HepG2 (cell line): ENCODE measurements at regions of chr2 and their contacts with region 1.

Region 1: GRCh38 chr2:1591978-1592907 is 152.1 kb downstream of the PXDN start:
- DNase-seq: no peak
- ATAC-seq: peak; percentile 67
- H3K4me3 ChIP-seq: no peak overlapping the region
- H3K27ac ChIP-seq: no peak overlapping the region
- H3K4me1 ChIP-seq: no peaks in the 10 kb centered on the region
- H3K27me3 ChIP-seq: peaks cover 10 to 49% of the 10 kb centered on the region in 2 experiments; a peak in 4 of 5 replicates
- CTCF ChIP-seq: peak; percentile 57
- EP300 ChIP-seq: no peak
- POLR2A ChIP-seq: no peak
- RAD21 ChIP-seq: peak; percentile 42; the same call in 1 of the 2 replicates

Region 2: GRCh38 chr2:1769703-1770422 is 177.6 kb after region 1 on chr2:
- CTCF ChIA-PET with region 1: interaction called, 4 read pairs
- POLR2A ChIA-PET with region 1: no interaction called
- in situ Hi-C with region 1: loop called (anchors 5 kb)
- intact Hi-C with region 1: no loop called
- DNase-seq: peak; percentile 65
- ATAC-seq: peak; percentile 95
- H3K4me3 ChIP-seq: no peak overlapping the region
- H3K27ac ChIP-seq: no peak overlapping the region
- H3K4me1 ChIP-seq: no peaks in the 10 kb centered on the region
- H3K27me3 ChIP-seq: peaks cover 3 to 24% of the 10 kb centered on the region in 2 experiments; a peak in 3 of 5 replicates
- CTCF ChIP-seq: peak; percentile 85
- EP300 ChIP-seq: no peak
- POLR2A ChIP-seq: no peak
- RAD21 ChIP-seq: peak; percentile 25; the same call in 1 of the 2 replicates

Region 3: GRCh38 chr2:1817256-1818051 is 225.2 kb after region 1 on chr2:
- CTCF ChIA-PET with region 1: no interaction called
- POLR2A ChIA-PET with region 1: no interaction called
- in situ Hi-C with region 1: no loop called
- intact Hi-C with region 1: loop called (anchors 2 kb)
- DNase-seq: peak; percentile 7
- ATAC-seq: peak; percentile 96
- H3K4me3 ChIP-seq: no peak overlapping the region
- H3K27ac ChIP-seq: no peak overlapping the region
- H3K4me1 ChIP-seq: no peaks in the 10 kb centered on the region
- H3K27me3 ChIP-seq: peaks cover 4 to 48% of the 10 kb centered on the region in 2 experiments; a peak in 4 of 5 replicates
- CTCF ChIP-seq: peak; percentile 92
- EP300 ChIP-seq: no peak
- POLR2A ChIP-seq: no peak
- RAD21 ChIP-seq: peak; percentile 33; the same call in 1 of the 2 replicates

Region 4: DNA sequence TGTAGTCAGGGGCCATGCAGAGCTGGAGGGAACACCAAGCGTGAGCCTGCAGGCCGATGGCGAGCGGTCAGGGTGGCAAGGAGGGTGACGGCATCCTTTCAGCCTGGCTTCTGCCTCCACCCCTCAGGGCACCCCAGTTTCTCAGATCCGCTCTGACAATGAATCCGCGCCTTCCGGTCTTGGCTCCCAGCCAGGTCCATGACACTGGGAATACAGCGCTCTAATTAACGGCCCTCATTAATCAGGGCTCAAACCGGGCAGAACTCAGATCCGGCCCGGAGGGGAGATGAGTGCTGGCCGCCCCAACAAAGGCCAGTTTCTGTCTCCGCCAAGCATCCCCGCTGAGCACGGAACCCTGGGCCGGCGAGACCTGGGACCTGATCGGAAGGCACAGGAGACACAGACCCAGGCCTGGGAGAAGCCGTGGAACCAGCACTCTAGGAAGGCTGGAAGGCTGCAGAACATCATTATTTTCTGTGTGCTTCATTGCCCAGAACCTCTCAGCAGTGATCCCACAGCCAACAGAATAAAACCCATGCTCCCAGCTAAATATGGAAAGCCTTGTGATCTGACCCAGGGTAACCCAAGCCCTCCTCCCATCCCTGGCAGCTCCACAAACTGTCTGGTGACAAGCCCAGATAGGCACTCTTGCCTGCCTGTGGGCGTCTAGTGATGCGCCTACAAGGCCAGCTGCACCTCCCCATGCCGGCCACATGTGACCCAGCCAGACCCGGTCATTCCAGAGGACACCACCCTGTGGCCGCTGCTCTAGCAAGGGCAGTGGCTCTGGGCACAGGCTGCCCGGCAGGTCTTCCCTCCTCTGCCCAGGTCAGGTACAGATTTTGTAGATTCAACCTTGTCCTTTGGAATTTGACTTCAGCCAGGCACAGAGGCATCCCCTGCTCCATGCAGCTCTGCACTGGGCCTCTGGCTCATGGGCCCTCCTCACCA is 1177.5 kb after region 1 on chr2:
- CTCF ChIA-PET with region 1: no interaction called
- POLR2A ChIA-PET with region 1: no interaction called
- in situ Hi-C with region 1: no loop called
- intact Hi-C with region 1: loop called (anchors 5 kb)
- DNase-seq: no peak
- ATAC-seq: peak; percentile 86
- H3K4me3 ChIP-seq: no peak overlapping the region
- H3K27ac ChIP-seq: no peak overlapping the region
- H3K4me1 ChIP-seq: no peaks in the 10 kb centered on the region
- H3K27me3 ChIP-seq: peaks cover 0 to 25% of the 10 kb centered on the region in 2 experiments; a peak in 2 of 5 replicates
- CTCF ChIP-seq: no peak
- EP300 ChIP-seq: no peak
- POLR2A ChIP-seq: no peak
- RAD21 ChIP-seq: no peak